Activated B cell treated with CpG ODN at 0.5 μM for 24 hours (primary cell): ENCODE measurements at regions of chr7 and their contacts with region 1.

Region 1: DNA sequence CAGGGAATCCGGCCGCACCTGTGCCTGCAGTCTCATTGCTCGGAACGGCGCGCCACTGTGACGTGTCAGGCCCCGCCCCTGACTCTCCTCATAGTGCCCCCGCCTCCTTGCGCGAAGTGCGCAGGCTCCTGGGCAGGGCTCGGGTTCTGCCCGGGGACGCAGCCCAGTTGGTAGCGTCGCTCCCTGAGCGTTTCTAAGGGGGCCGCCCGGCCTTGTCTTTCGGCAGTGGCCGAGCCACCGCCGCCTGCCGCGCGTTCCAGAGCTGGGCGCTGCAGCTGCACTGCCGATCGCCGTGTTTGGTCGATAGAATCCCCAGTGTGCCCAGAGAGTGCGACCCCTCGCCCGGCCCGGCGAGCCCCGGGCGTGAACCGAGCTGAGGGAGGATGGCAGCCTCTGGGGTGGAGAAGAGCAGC is at the start of gene KLHL7:
- DNase-seq: peak; percentile 98
- ATAC-seq: peak; percentile 95
- H3K4me3 Mint-ChIP-seq: peak within 1 kb of the TSS; percentile 94
- H3K27ac Mint-ChIP-seq: peak within 1 kb of the TSS; percentile 97
- H3K4me1 Mint-ChIP-seq: peaks cover 32% of the 10 kb centered on the region
- H3K27me3 Mint-ChIP-seq: no peaks in the 10 kb centered on the region
- CTCF ChIP-seq: no peak
- total RNA-seq, gene KLHL7: 12.2 and 13.4 TPM in 2 replicates

Region 2: DNA sequence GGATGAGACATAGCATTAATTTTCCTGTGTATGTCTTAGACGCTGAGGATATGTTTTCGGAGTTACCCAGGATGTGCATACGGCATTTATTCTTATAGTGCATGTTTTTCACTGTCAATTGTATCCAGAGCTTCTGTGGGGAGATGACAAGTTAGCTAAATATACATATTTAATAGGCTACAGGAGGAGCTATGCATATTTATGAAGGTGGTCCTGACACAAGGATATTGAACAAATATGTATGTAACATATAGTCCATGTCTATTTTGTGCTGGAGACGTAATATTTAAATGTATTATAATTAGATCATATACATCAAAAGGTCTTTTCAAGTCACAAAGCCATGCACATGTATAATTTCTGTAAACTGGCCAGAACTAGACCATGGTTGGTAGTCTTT is 362.6 kb before region 1 on chr7:
- CTCF ChIA-PET with region 1: no interaction called
- POLR2A ChIA-PET with region 1: no interaction called
- intact Hi-C with region 1: no loop called
- DNase-seq: no peak
- ATAC-seq: no peak
- H3K4me3 Mint-ChIP-seq: no peak overlapping the region
- H3K27ac Mint-ChIP-seq: no peak overlapping the region
- H3K4me1 Mint-ChIP-seq: peaks cover 2% of the 10 kb centered on the region
- H3K27me3 Mint-ChIP-seq: no peaks in the 10 kb centered on the region
- CTCF ChIP-seq: no peak

Region 3: GRCh38 chr7:22822486-22823141 is 283.0 kb before region 1 on chr7 and contains the start of gene TOMM7:
- CTCF ChIA-PET with region 1: no interaction called
- POLR2A ChIA-PET with region 1: no interaction called
- intact Hi-C with region 1: loop called (anchors 1 kb)
- DNase-seq: peak; percentile 66
- ATAC-seq: peak; percentile 99
- H3K4me3 Mint-ChIP-seq: peak within 1 kb of the TSS; percentile 99
- H3K27ac Mint-ChIP-seq: peak within 1 kb of the TSS; percentile 91
- H3K4me1 Mint-ChIP-seq: peaks cover 39% of the 10 kb centered on the region
- H3K27me3 Mint-ChIP-seq: peaks cover 11% of the 10 kb centered on the region
- CTCF ChIP-seq: no peak
- total RNA-seq, gene TOMM7: 324 and 406 TPM in 2 replicates

Region 4: GRCh38 chr7:23181684-23182553 is 76.3 kb after region 1 on chr7 and contains the start of gene NUP42:
- CTCF ChIA-PET with region 1: no interaction called
- POLR2A ChIA-PET with region 1: interaction called, 58 read pairs
- intact Hi-C with region 1: loop called (anchors 1 kb)
- DNase-seq: peak; percentile 90
- ATAC-seq: peak; percentile 90
- H3K4me3 Mint-ChIP-seq: peak within 1 kb of the TSS; percentile 94
- H3K27ac Mint-ChIP-seq: peak within 1 kb of the TSS; percentile 100
- H3K4me1 Mint-ChIP-seq: peaks cover 28% of the 10 kb centered on the region
- H3K27me3 Mint-ChIP-seq: no peaks in the 10 kb centered on the region
- CTCF ChIP-seq: no peak
- total RNA-seq, gene NUP42: 39.2 and 50.6 TPM in 2 replicates

Region 5: DNA sequence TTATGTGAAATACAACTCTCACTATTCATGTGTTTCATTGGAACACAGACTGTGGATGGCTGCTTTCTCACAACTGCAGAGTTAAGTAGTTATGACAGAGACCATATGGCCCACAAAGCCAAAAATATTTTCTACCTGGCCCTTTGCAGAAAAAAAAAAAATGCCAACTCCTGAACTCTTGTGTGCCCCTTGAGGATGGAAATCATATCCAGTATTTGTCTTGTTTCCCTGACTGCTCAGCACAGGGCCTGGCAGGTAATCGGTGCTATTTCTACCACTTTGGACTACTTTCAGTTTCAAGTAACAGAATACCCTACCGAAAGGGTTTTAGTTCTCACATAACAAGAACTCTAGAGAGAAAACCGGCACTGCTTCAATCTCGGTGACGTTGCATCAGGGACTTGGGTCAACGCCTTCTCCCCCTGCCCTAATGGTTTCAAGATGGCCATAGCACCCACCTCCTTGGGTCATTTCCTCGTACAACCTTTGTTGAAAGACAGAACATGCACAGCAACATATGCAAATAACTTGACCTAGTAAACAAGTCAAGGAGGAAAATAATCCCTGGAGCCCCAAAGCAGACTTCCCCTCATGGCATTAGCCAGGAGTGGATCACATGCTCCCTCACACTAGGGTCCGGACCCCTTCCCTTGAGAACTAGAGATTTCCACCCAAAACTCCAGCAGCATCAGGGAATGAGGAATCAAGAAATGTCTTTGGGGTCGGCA is 129.1 kb after region 1 on chr7:
- CTCF ChIA-PET with region 1: no interaction called
- POLR2A ChIA-PET with region 1: no interaction called
- intact Hi-C with region 1: no loop called
- DNase-seq: no peak
- ATAC-seq: no peak
- H3K4me3 Mint-ChIP-seq: peak overlapping the region; percentile 42
- H3K27ac Mint-ChIP-seq: no peak overlapping the region
- H3K4me1 Mint-ChIP-seq: no peaks in the 10 kb centered on the region
- H3K27me3 Mint-ChIP-seq: no peaks in the 10 kb centered on the region
- CTCF ChIP-seq: no peak

Region 6: GRCh38 chr7:23474094-23474828 is 368.6 kb after region 1 on chr7:
- CTCF ChIA-PET with region 1: no interaction called
- POLR2A ChIA-PET with region 1: no interaction called
- intact Hi-C with region 1: loop called (anchors 5 kb)
- DNase-seq: peak; percentile 62
- ATAC-seq: peak; percentile 67
- H3K4me3 Mint-ChIP-seq: peak overlapping the region; percentile 77
- H3K27ac Mint-ChIP-seq: peak overlapping the region; percentile 41
- H3K4me1 Mint-ChIP-seq: peaks cover 30% of the 10 kb centered on the region
- H3K27me3 Mint-ChIP-seq: peaks cover 49% of the 10 kb centered on the region
- CTCF ChIP-seq: no peak

Region 7: DNA sequence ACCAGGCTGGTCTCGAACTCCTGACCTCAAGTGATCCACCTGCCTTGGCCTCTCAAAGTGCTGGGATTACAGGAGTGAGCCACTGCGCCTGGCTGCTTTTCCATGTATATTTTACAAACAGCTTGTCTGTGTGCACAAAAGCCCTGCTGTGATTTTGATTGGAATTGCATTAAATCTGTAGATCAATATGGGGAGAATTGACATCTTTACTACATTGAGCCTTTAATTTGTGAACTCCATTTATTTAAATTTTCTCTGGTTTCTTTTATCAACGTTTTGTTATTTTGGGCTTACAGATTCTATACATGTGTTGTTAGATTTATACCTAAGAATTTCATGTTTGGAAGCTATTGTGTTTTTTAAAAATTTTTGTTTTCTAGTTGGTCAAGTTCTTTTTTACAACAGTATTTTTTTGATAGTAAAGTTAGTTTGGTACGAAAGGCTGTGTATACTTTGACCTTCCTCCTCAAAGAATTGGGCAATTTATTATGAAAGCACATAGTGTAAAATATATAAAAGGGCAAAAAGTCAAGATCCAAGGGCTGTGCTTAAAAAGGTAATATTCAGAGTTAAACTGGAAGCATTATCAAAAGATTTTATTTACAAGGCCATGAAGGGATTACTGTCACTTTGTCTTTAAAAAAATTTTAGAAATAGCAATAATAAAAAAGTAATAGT is 697.2 kb after region 1 on chr7:
- CTCF ChIA-PET with region 1: no interaction called
- POLR2A ChIA-PET with region 1: no interaction called
- intact Hi-C with region 1: no loop called
- DNase-seq: no peak
- ATAC-seq: no peak
- H3K4me3 Mint-ChIP-seq: no peak overlapping the region
- H3K27ac Mint-ChIP-seq: no peak overlapping the region
- H3K4me1 Mint-ChIP-seq: no peaks in the 10 kb centered on the region
- H3K27me3 Mint-ChIP-seq: peaks cover 11% of the 10 kb centered on the region
- CTCF ChIP-seq: no peak